ENCODE measurements at regions of chr4 and their contacts with region 1.

Region 1: GRCh38 chr4:41661442-41662076 is 87.0 kb downstream of the PHOX2B start:
- DNase-seq: peak; percentile 46 to 65
- H3K4me3 ChIP-seq: no peak overlapping the region
- H3K4me3 Mint-ChIP-seq: no peak overlapping the region
- H3K27ac Mint-ChIP-seq: no peak overlapping the region
- H3K4me1 ChIP-seq: no peaks in the 10 kb centered on the region
- H3K4me1 Mint-ChIP-seq: no peaks in the 10 kb centered on the region
- H3K27me3 ChIP-seq: no peaks in the 10 kb centered on the region
- H3K27me3 Mint-ChIP-seq: no peaks in the 10 kb centered on the region
- CTCF ChIP-seq: peak; percentile 86 to 88

Region 2: DNA sequence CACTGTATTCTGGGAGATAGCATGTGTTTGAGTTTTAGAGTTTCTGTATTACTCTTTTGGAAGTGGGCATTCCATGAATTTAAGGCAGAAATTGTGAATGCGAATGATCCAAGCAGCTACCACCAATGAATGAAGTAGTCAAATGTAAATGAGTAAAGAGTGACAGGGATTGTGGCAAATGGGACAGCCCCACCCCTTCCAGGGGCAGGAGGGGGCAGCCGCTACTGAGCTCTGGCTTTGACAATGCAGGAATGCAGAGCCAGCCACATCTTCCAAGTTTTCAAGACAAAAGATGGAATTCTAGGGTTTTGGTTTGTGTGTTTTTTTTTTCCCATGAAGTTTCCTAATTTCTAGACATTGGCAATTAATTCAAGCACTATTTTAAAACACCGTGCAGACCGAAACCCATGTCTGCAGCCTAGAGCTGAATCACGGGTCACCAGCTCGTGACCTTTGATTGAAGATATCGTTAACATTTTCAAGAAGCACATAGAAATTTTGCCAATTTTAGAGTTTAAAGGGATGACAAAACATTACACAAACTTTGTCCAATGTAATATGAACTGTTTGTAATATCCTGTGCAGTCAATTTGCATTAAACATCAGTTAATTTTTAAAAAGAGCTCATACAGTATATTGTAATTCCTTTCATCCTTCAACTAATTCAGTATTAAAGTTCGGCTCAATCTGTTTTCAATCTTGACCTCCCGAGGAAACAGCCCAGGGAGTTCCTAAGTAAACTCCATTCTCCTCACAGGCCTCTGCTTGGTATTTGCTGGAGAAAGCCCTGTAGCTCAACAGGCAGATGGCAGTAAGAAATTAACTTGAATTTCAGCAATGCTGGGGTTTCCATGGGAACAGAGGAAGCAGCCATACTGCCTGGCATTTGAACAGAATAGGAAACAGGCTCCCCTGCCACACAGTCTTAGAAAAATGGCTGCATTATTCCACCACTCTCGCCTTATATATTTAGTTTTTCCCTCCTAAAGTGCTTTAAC is 321.4 kb before region 1 on chr4:
- CTCF ChIA-PET with region 1: no interaction called
- POLR2A ChIA-PET with region 1: no interaction called
- intact Hi-C with region 1: loop called (anchors 1 kb)
- DNase-seq: peak in 1 of 2 experiments; percentile 38
- H3K4me3 ChIP-seq: no peak overlapping the region
- H3K4me3 Mint-ChIP-seq: no peak overlapping the region
- H3K27ac Mint-ChIP-seq: no peak overlapping the region
- H3K4me1 ChIP-seq: no peaks in the 10 kb centered on the region
- H3K4me1 Mint-ChIP-seq: no peaks in the 10 kb centered on the region
- H3K27me3 ChIP-seq: no peaks in the 10 kb centered on the region
- H3K27me3 Mint-ChIP-seq: no peaks in the 10 kb centered on the region
- CTCF ChIP-seq: no peak

Region 3: GRCh38 chr4:41360214-41360920 is 301.2 kb before region 1 on chr4:
- CTCF ChIA-PET with region 1: no interaction called
- POLR2A ChIA-PET with region 1: no interaction called
- intact Hi-C with region 1: loop called (anchors 10 kb)
- DNase-seq: peak; percentile 52 to 67
- H3K4me3 ChIP-seq: peak overlapping the region; percentile 62
- H3K4me3 Mint-ChIP-seq: peak overlapping the region; percentile 72
- H3K27ac Mint-ChIP-seq: no peak overlapping the region
- H3K4me1 ChIP-seq: no peaks in the 10 kb centered on the region
- H3K4me1 Mint-ChIP-seq: no peaks in the 10 kb centered on the region
- H3K27me3 ChIP-seq: peaks cover 2% of the 10 kb centered on the region; the same call in 1 of the 2 replicates
- H3K27me3 Mint-ChIP-seq: no peaks in the 10 kb centered on the region
- CTCF ChIP-seq: no peak

Region 4: GRCh38 chr4:41475402-41475801 is 186.2 kb before region 1 on chr4:
- CTCF ChIA-PET with region 1: no interaction called
- POLR2A ChIA-PET with region 1: no interaction called
- intact Hi-C with region 1: no loop called
- DNase-seq: peak; percentile 9 to 42
- H3K4me3 ChIP-seq: no peak overlapping the region
- H3K4me3 Mint-ChIP-seq: no peak overlapping the region
- H3K27ac Mint-ChIP-seq: no peak overlapping the region
- H3K4me1 ChIP-seq: peaks cover 9% of the 10 kb centered on the region
- H3K4me1 Mint-ChIP-seq: peaks cover 9% of the 10 kb centered on the region
- H3K27me3 ChIP-seq: no peaks in the 10 kb centered on the region
- H3K27me3 Mint-ChIP-seq: no peaks in the 10 kb centered on the region
- CTCF ChIP-seq: no peak

Region 5: DNA sequence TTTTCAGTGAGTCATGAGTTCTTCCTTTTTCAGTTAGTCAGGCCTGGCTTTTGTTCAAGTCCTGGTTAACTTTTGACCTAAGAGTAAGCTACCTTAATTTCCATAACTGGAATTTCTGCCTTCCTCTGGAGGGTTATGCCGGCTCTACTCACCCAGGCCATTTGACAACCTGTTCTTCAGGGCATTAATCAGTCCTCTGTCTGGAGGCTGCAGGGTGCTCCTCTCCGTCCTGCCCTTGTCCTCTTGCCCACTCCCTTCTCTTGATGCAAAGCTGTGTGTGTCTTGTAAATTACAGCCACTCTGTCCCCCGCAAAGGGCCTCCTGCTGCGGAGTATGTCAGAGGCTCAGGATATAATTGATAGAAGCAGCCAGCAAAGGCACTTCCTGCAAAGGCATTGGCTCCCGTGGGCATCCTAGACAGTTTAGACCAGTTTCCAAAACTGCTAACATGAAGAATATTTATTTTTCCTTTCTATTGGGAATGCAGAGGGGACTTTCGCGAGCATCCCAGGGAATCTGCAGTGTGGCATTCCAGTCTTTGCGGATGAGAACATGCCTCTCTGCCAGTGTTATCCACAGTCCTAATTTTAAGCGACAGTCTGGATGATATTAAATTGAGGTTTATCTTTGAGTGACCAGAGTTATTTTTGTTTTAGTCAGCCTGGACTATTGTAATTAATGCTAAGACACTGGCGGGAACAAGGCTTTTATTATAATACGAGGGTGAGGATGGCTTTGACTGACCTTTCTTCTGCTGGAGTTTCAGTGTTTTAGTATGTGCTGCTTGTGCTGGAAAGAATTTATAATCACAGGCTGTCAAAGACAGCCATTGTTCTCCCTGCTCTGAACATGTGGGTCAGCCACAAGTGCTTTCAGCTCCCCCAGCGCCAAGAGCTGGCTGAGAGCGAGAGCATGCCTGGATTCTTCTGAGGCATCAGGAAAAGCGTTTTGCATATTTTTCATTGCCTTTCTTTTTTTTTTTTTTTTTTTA is 49.4 kb before region 1 on chr4:
- CTCF ChIA-PET with region 1: no interaction called
- POLR2A ChIA-PET with region 1: no interaction called
- intact Hi-C with region 1: no loop called
- DNase-seq: peak; percentile 38 to 42
- H3K4me3 ChIP-seq: no peak overlapping the region
- H3K4me3 Mint-ChIP-seq: no peak overlapping the region
- H3K27ac Mint-ChIP-seq: no peak overlapping the region
- H3K4me1 ChIP-seq: peaks cover 15% of the 10 kb centered on the region
- H3K4me1 Mint-ChIP-seq: peaks cover 12% of the 10 kb centered on the region
- H3K27me3 ChIP-seq: no peaks in the 10 kb centered on the region
- H3K27me3 Mint-ChIP-seq: no peaks in the 10 kb centered on the region
- CTCF ChIP-seq: no peak

Measured in Caco-2 (cell line).